ENCODE measurements at regions of chr17 and their contacts with region 1.

Region 1: DNA sequence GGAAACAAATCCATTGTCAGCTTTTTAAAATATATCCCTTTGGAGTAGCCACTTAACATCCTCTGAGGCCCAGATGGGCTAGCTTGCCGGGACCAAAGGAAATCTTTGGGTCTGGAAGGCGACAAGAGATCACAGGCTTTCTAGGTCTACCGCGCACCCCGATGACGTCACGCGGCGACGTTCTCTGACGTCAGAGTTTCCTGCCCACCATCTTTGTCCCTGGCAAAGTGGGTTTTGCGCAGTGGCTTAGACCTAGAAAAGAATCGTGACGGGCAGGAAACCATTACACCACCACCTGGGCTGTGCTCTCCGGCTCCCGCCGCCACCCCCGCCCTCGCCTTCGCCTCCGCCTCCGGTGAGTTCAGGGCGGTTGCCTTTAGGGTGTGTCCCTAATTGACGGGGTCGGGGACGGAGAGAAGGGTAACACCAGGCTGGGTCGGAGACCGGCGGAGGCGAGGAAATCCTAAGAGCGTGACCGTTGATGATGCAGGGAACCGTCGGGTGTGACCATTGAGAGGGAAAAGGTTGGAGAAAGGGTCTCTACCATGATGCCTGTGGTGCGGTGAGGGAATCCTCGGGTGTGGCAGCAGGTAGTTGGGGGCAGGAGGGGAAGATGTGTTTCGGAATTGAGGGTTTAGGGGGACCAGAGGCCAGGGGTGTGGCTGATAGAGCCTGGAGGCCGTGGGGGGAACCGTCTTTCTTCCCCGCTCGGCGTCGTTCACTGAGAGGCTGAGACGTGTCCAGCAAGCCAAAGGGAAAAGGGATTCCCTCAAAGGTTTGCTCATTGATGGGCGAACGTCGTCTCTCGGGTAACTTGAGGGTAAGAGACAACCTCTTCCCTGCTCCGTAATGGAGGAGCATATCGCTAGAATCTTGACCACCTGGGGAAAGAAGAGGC is at the start of gene AP2B1:
- DNase-seq: peak; percentile 96 to 100 (median 97)
- ATAC-seq: peak; percentile 98
- H3K4me3 ChIP-seq: peak within 1 kb of the TSS; percentile 84 to 92
- H3K4me3 Mint-ChIP-seq: peak within 1 kb of the TSS; percentile 99
- H3K27ac ChIP-seq: peak within 1 kb of the TSS; percentile 86 to 93
- H3K27ac Mint-ChIP-seq: peak within 1 kb of the TSS; percentile 98
- H3K4me1 ChIP-seq: peaks cover 21% of the 10 kb centered on the region
- H3K4me1 Mint-ChIP-seq: peaks cover 38% of the 10 kb centered on the region
- H3K27me3 ChIP-seq: no peaks in the 10 kb centered on the region
- H3K27me3 Mint-ChIP-seq: no peaks in the 10 kb centered on the region
- CTCF ChIP-seq: no peak
- total RNA-seq, gene AP2B1: 58.7 to 65.7 TPM

Region 2: DNA sequence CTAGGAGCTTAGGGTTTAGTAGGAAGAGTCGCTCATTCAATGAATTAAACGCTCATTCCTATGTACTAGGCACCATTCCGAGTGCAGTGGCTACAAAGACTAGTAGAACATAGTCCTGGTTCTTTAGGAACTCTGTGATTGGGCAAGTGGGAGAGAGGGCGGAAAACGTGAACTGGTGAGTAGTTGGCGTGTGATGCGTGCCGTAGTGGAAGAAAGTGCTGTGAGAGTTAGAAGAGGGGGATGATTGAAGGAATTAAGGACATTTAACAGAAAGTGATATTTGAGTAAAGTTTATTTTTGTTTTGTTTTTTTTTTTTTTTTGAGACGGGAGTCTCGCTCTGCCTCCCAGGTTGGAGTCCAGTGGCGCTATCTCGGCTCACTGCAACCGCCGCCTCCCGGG is 18.8 kb before region 1 on chr17:
- CTCF ChIA-PET with region 1: no interaction called
- POLR2A ChIA-PET with region 1: interaction called, 3 read pairs
- intact Hi-C with region 1: loop called (anchors 1 kb)
- DNase-seq: peak in 3 of 9 experiments; percentile 15 to 54 (median 39)
- ATAC-seq: peak; percentile 28
- H3K4me3 ChIP-seq: peak overlapping the region; percentile 85 to 97
- H3K4me3 Mint-ChIP-seq: peak overlapping the region; percentile 91
- H3K27ac ChIP-seq: peak overlapping the region; percentile 83 to 88
- H3K27ac Mint-ChIP-seq: peak overlapping the region; percentile 96
- H3K4me1 ChIP-seq: peaks cover 21% of the 10 kb centered on the region
- H3K4me1 Mint-ChIP-seq: peaks cover 31% of the 10 kb centered on the region
- H3K27me3 ChIP-seq: no peaks in the 10 kb centered on the region
- H3K27me3 Mint-ChIP-seq: no peaks in the 10 kb centered on the region
- CTCF ChIP-seq: no peak

Measured in CD8-positive, alpha-beta T cell (primary cell).